Activated T-helper 2 cell treated with anti-CD3 and anti-CD28 coated beads, Interferon-gamma antibody, Interleukin-2, Interleukin-4, amounts not matched to agents 10 μg/mL and 5 μg/mL and 100 μg/mL, durations not matched to agents 14 hours and 24 hours and 36 hours (primary cell): ENCODE measurements at regions of chr7 and their contacts with region 1.

Region 1: GRCh38 chr7:322111-322671 is 32.2 kb downstream of the FOXL3 start:
- DNase-seq: peak; percentile 66
- H3K4me3 Mint-ChIP-seq: no peak overlapping the region
- H3K27ac Mint-ChIP-seq: no peak overlapping the region
- H3K4me1 Mint-ChIP-seq: no peaks in the 10 kb centered on the region
- H3K27me3 Mint-ChIP-seq: peaks cover 2% of the 10 kb centered on the region

Region 2: DNA sequence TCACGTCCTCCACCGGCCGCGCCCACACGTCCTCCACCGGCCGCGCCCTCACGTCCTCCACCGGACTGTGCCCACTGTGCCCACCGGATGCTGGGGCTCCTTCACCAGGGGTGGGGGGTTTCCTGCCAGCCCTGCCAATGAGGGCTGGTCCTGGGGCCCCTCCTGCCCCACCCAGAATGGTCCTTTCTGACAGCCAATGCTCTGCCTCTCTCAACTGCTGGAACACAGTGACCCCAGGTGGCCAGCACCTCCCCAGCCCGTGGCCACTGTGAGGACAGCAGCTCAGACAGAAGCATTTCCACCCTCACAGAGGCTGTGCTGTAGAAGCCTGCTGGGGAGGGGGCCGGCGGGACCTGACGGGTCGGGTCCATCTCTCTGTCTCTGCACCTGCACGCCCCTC is 314.2 kb after region 1 on chr7:
- intact Hi-C with region 1: loop called (anchors 5 kb)
- DNase-seq: no peak
- H3K4me3 Mint-ChIP-seq: no peak overlapping the region
- H3K27ac Mint-ChIP-seq: no peak overlapping the region
- H3K4me1 Mint-ChIP-seq: peaks cover 7% of the 10 kb centered on the region
- H3K27me3 Mint-ChIP-seq: no peaks in the 10 kb centered on the region

Region 3: GRCh38 chr7:774161-775109 is 452.2 kb after region 1 on chr7:
- intact Hi-C with region 1: loop called (anchors 1 kb)
- DNase-seq: peak; percentile 34
- H3K4me3 Mint-ChIP-seq: no peak overlapping the region
- H3K27ac Mint-ChIP-seq: no peak overlapping the region
- H3K4me1 Mint-ChIP-seq: no peaks in the 10 kb centered on the region
- H3K27me3 Mint-ChIP-seq: no peaks in the 10 kb centered on the region